ENCODE measurements at regions of chr5 and their contacts with region 1.

Region 1: GRCh38 chr5:132466433-132467286 is 23.9 kb downstream of the IRF1 start:
- DNase-seq: peak in 8 of 9 donors; percentile 58 to 76 (median 72)
- ATAC-seq: peak; percentile 81
- H3K4me3 ChIP-seq: peak overlapping the region; percentile 57
- H3K4me3 Mint-ChIP-seq: peak overlapping the region; percentile 72 to 87 (median 78)
- H3K27ac ChIP-seq: peak overlapping the region; percentile 69
- H3K27ac Mint-ChIP-seq: peak overlapping the region; percentile 83 to 95 (median 94)
- H3K4me1 ChIP-seq: peaks cover 71 to 93% of the 10 kb centered on the region in 2 donors
- H3K4me1 Mint-ChIP-seq: peaks cover 58 to 98% (median 97%) of the 10 kb centered on the region in 7 donors
- H3K27me3 ChIP-seq: no peaks in the 10 kb centered on the region
- H3K27me3 Mint-ChIP-seq: no peaks in the 10 kb centered on the region

Region 2: DNA sequence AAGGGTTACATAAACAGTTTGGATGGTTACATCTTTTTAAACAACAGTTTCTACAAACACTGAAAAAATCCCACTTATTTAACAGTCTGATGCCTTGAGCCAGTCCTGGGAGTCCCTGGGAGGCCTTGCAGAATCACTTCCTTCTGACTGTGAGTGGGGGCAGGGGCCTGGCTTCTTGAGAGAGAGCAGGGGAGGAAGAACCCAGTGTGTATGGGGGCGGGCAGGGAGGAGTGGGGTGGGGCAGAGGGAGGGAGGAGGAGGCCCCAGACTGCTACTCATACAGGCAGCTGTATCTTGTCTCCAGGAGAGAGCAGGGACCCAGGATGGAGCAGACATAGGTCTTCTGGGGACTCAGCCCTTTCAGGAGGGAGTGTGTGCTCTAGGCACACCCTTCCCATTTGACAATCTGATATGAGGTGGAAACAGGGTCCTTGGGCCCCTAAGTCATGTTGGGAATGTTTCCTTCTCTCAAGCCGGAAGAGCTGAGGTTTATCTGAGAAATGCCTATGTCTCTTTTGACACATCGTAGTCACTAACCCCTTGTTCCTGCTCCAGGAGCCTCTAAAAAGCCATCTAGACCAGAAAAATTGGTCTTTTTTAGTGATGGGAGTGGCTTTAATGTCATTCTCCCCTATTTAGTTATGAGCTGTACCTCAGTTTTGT is 28.9 kb before region 1 on chr5:
- CTCF ChIA-PET with region 1: interaction called, 8 read pairs
- POLR2A ChIA-PET with region 1: interaction called, 23 read pairs
- intact Hi-C with region 1: no loop called
- DNase-seq: peak in 8 of 9 donors; percentile 36 to 66 (median 56)
- ATAC-seq: peak; percentile 88
- H3K4me3 ChIP-seq: peak overlapping the region; percentile 25
- H3K4me3 Mint-ChIP-seq: peak overlapping the region; percentile 60 to 79 (median 68)
- H3K27ac ChIP-seq: peak overlapping the region; percentile 67
- H3K27ac Mint-ChIP-seq: peak overlapping the region; percentile 79 to 93 (median 85)
- H3K4me1 ChIP-seq: peaks cover 61 to 86% of the 10 kb centered on the region in 2 donors
- H3K4me1 Mint-ChIP-seq: peaks cover 68 to 96% (median 83%) of the 10 kb centered on the region in 7 donors
- H3K27me3 ChIP-seq: no peaks in the 10 kb centered on the region
- H3K27me3 Mint-ChIP-seq: no peaks in the 10 kb centered on the region

Region 3: GRCh38 chr5:132446669-132447068 is 20.0 kb before region 1 on chr5:
- CTCF ChIA-PET with region 1: interaction called, 3 read pairs
- POLR2A ChIA-PET with region 1: interaction called, 41 read pairs
- intact Hi-C with region 1: no loop called
- DNase-seq: no peak
- ATAC-seq: no peak
- H3K4me3 ChIP-seq: peak overlapping the region; percentile 3
- H3K4me3 Mint-ChIP-seq: peak overlapping the region in 8 of 10 donors; percentile 30 to 71 (median 61)
- H3K27ac ChIP-seq: no peak overlapping the region
- H3K27ac Mint-ChIP-seq: peak overlapping the region in 8 of 9 donors; percentile 64 to 94 (median 79)
- H3K4me1 ChIP-seq: peaks cover 54 to 76% of the 10 kb centered on the region in 2 donors
- H3K4me1 Mint-ChIP-seq: peaks cover 52 to 93% (median 76%) of the 10 kb centered on the region in 7 donors
- H3K27me3 ChIP-seq: no peaks in the 10 kb centered on the region
- H3K27me3 Mint-ChIP-seq: no peaks in the 10 kb centered on the region

Region 4: DNA sequence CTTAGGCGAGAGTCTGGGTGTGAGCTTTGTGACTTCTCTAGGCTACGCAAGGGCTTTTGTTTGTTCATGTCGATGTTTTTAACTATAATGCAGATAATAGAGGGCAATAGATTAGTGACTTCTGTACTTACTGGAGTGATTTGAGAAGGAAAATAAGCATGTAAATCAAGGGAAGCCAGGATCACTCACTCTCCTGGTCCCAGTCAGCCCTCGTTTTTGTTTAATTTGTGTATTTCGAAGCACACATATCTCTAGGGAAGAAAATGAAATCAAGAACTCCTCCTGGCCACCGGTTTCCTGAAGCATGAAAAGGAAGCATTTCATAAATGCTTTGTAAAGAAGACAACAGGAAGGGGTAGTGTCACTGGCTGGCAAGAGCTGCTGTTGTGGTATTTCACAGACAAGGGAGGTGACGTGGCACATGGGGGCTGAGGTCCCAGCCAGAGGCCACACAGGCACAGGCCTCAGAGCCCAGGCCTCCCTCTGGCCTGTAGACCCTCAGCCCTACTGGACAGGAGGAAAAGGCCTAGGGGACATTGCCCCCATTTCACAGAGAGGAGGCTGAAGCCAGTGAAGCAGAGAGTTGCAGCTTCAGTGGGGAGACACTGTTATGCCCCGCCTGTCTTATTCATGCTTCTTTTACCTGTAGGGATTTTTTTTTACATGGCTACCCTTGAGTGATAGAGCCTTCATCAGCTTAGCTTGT is 10.2 kb before region 1 on chr5:
- CTCF ChIA-PET with region 1: interaction called, 24 read pairs
- POLR2A ChIA-PET with region 1: interaction called, 222 read pairs
- intact Hi-C with region 1: loop called (anchors 1 kb)
- DNase-seq: peak in 8 of 9 donors; percentile 55 to 80 (median 70)
- ATAC-seq: peak; percentile 84
- H3K4me3 ChIP-seq: peak overlapping the region; percentile 40
- H3K4me3 Mint-ChIP-seq: peak overlapping the region; percentile 60 to 85 (median 78)
- H3K27ac ChIP-seq: peak overlapping the region; percentile 77
- H3K27ac Mint-ChIP-seq: peak overlapping the region; percentile 93 to 100 (median 99)
- H3K4me1 ChIP-seq: peaks cover 89 to 96% of the 10 kb centered on the region in 2 donors
- H3K4me1 Mint-ChIP-seq: peaks cover 81 to 94% (median 91%) of the 10 kb centered on the region in 7 donors
- H3K27me3 ChIP-seq: no peaks in the 10 kb centered on the region
- H3K27me3 Mint-ChIP-seq: no peaks in the 10 kb centered on the region

Region 5: GRCh38 chr5:132915681-132916080 is 449.0 kb after region 1 on chr5:
- CTCF ChIA-PET with region 1: no interaction called
- POLR2A ChIA-PET with region 1: no interaction called
- intact Hi-C with region 1: no loop called
- DNase-seq: no peak
- ATAC-seq: peak; percentile 70
- H3K4me3 ChIP-seq: no peak overlapping the region
- H3K4me3 Mint-ChIP-seq: no peak overlapping the region
- H3K27ac ChIP-seq: no peak overlapping the region
- H3K27ac Mint-ChIP-seq: no peak overlapping the region
- H3K4me1 ChIP-seq: no peaks in the 10 kb centered on the region
- H3K4me1 Mint-ChIP-seq: peaks cover 0 to 22% (median 18%) of the 10 kb centered on the region in 7 donors
- H3K27me3 ChIP-seq: no peaks in the 10 kb centered on the region
- H3K27me3 Mint-ChIP-seq: no peaks in the 10 kb centered on the region